Heart right ventricle (tissue), 16 donors: ENCODE measurements at regions of chr1 and their contacts with region 1.

Region 1: DNA sequence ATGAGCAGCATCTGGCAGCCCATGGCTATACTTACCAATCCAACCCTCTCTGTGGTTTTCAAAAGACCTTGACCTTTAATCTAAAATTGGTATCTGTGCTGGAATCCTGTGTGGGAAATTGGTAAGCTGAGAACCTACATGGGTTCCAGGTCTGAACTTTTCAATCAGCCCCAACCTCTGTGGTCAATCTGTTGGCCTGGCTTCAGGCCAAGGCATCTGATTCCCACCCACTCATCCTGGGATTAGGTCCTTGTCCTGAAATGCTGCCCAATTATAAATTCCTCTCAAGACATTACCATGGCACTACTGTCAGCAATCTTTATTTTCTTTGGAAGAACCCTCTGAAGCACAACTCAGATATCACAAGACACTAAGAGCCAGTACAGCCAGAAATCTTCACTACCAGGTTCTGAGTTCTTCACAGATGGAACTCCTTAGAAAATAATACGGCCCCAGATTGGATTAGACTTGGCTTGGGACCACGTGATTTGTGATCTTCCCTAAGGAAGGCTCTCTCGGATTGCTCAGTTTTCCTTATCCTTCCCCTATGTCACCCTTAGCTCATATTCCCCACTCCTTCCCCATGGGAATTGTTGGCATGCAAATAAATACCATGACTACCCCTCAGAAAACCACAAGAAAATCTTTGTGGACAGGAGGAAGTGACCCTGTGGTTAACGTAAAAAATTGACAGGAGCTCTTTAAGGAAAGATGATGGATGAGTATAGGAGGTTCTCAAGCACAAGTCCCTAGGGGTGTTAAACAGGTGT is 207.9 kb upstream of the ST6GALNAC5 start:
- DNase-seq: no peak
- ATAC-seq: no peak
- H3K4me3 ChIP-seq: no peak overlapping the region
- H3K27ac ChIP-seq: no peak overlapping the region
- H3K4me1 ChIP-seq: no peaks in the 10 kb centered on the region
- H3K27me3 ChIP-seq: no peaks in the 10 kb centered on the region
- CTCF ChIP-seq: no peak

Region 2: GRCh38 chr1:76601465-76601864 is 57.9 kb before region 1 on chr1:
- intact Hi-C with region 1: loop called in 1 of 10 experiments (anchors 2 kb)
- DNase-seq: no peak
- ATAC-seq: no peak
- H3K4me3 ChIP-seq: no peak overlapping the region
- H3K27ac ChIP-seq: no peak overlapping the region
- H3K4me1 ChIP-seq: no peaks in the 10 kb centered on the region
- H3K27me3 ChIP-seq: no peaks in the 10 kb centered on the region
- CTCF ChIP-seq: no peak

Region 3: GRCh38 chr1:77018761-77019160 is 359.4 kb after region 1 on chr1:
- intact Hi-C with region 1: loop called in 1 of 10 experiments (anchors 5 kb)
- DNase-seq: no peak
- ATAC-seq: no peak
- H3K4me3 ChIP-seq: no peak overlapping the region
- H3K27ac ChIP-seq: no peak overlapping the region
- H3K4me1 ChIP-seq: no peaks in the 10 kb centered on the region
- H3K27me3 ChIP-seq: peaks cover 0 to 9% (median 0%) of the 10 kb centered on the region in 7 donors
- CTCF ChIP-seq: no peak